ENCODE measurements at regions of chr5 and their contacts with region 1.

Region 1: GRCh38 chr5:1140171-1140817 is 28.4 kb upstream of the SLC12A7 start:
- DNase-seq: peak; percentile 82 to 95 (median 90)
- ATAC-seq: peak; percentile 90 to 97 (median 94)
- H3K4me3 ChIP-seq: no peak overlapping the region
- H3K27ac ChIP-seq: peak overlapping the region in 2 of 4 donors; percentile 62 to 66
- H3K4me1 ChIP-seq: no peaks in the 10 kb centered on the region
- H3K27me3 ChIP-seq: no peaks in the 10 kb centered on the region
- CTCF ChIP-seq: peak; percentile 75 to 90 (median 85)

Region 2: GRCh38 chr5:912280-913091 is 227.8 kb before region 1 on chr5:
- intact Hi-C with region 1: no loop called
- DNase-seq: no peak
- ATAC-seq: peak in 1 of 4 donors; percentile 43
- H3K4me3 ChIP-seq: no peak overlapping the region
- H3K27ac ChIP-seq: no peak overlapping the region
- H3K4me1 ChIP-seq: peaks cover 11 to 15% (median 11%) of the 10 kb centered on the region in 3 donors
- H3K27me3 ChIP-seq: no peaks in the 10 kb centered on the region
- CTCF ChIP-seq: no peak

Region 3: GRCh38 chr5:922436-923280 is 217.6 kb before region 1 on chr5:
- intact Hi-C with region 1: no loop called
- DNase-seq: peak in 1 of 6 donors; percentile 11
- ATAC-seq: no peak
- H3K4me3 ChIP-seq: no peak overlapping the region
- H3K27ac ChIP-seq: no peak overlapping the region
- H3K4me1 ChIP-seq: peaks cover 2 to 4% (median 3%) of the 10 kb centered on the region in 3 donors
- H3K27me3 ChIP-seq: no peaks in the 10 kb centered on the region
- CTCF ChIP-seq: no peak

Region 4: DNA sequence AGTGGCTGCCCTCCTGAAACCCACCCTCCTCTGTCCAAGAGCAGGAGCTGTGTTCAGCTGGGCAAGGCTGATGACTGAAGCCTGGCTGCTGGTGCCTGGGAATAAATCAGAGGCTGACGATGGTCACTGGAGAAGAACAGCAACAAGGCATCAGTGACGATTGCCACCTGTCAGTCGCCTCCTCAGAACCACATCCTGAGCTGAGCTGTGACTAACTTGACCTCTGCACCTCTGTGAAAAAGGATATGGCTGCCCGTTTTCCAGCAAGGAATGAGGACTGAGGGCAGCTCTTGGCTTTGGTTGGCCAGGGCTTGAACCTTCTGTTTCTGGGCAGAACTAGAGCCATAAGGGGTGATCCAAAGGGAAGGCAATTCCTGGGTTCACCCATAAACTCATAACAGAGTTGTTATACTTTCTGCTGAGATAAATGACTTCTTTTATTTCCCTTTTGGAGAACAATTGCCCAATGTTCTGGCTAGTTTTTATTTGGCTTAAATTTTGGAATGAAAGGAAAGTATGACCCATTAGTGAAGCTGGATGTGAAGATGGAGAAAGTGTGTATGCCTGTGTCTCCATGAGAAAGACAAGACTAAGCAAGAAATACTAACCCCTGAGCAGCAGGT is 207.6 kb before region 1 on chr5:
- intact Hi-C with region 1: loop called in 1 of 3 experiments (anchors 10 kb)
- DNase-seq: peak in 1 of 6 donors; percentile 6
- ATAC-seq: peak in 1 of 4 donors; percentile 30
- H3K4me3 ChIP-seq: no peak overlapping the region
- H3K27ac ChIP-seq: no peak overlapping the region
- H3K4me1 ChIP-seq: no peaks in the 10 kb centered on the region
- H3K27me3 ChIP-seq: no peaks in the 10 kb centered on the region
- CTCF ChIP-seq: no peak

Region 5: GRCh38 chr5:956941-957747 is 183.2 kb before region 1 on chr5:
- intact Hi-C with region 1: no loop called
- DNase-seq: peak in 2 of 6 donors; percentile 39 to 49
- ATAC-seq: peak; percentile 51 to 79 (median 70)
- H3K4me3 ChIP-seq: no peak overlapping the region
- H3K27ac ChIP-seq: peak overlapping the region; percentile 54 to 76 (median 62)
- H3K4me1 ChIP-seq: peaks cover 0 to 4% (median 0%) of the 10 kb centered on the region in 3 donors
- H3K27me3 ChIP-seq: no peaks in the 10 kb centered on the region
- CTCF ChIP-seq: no peak

Region 6: DNA sequence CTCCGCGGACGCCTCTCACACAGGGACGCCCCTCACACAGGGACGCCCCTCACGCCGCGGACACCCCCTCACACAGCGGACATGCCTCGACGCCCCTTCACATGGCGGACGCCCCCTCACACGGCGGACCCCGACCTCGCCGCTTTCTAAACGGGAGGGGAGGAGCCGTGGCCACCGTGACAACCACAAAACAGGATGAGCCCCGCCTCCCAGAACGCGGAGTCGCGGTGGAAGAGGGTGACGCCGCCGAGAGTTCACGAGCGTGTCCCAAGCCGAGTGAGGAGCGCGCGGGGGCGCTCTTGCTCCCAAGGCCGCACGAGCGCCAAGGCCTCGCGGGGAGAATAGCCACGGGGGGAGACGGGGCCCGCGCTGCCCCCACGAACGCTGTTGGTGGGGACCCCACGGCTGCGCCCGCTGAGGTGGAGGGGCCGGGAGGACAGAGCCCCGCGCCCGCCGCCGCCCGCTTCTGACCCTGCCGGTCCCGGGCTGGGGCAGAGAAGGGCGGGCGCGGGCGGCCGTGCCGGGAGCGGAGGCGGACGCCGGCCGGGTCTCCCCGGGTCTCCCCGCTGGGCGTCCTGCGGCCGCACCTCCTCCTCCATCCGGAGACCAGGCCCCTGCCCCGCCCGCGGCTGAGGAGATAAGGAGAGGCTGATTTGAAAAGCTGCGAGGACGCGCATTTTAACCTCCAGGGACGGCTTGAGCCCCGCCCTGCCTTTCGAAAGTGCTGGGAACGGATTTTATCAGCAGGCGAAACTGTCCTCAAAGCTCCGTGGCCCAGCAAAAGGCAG is 135.6 kb before region 1 on chr5:
- intact Hi-C with region 1: loop called in 1 of 3 experiments (anchors 10 kb)
- DNase-seq: peak; percentile 58 to 87 (median 70)
- ATAC-seq: peak; percentile 66 to 81 (median 78)
- H3K4me3 ChIP-seq: peak overlapping the region; percentile 9 to 56 (median 27)
- H3K27ac ChIP-seq: peak overlapping the region; percentile 0 to 29 (median 10)
- H3K4me1 ChIP-seq: peaks cover 0 to 6% (median 0%) of the 10 kb centered on the region in 3 donors
- H3K27me3 ChIP-seq: no peaks in the 10 kb centered on the region
- CTCF ChIP-seq: no peak

Region 7: GRCh38 chr5:1011226-1011631 is 129.1 kb before region 1 on chr5:
- intact Hi-C with region 1: loop called in 2 of 3 experiments (anchors 5 to 10 kb)
- DNase-seq: peak; percentile 55 to 86 (median 79)
- ATAC-seq: peak; percentile 51 to 85 (median 71)
- H3K4me3 ChIP-seq: no peak overlapping the region
- H3K27ac ChIP-seq: no peak overlapping the region
- H3K4me1 ChIP-seq: peaks cover 4 to 16% (median 6%) of the 10 kb centered on the region in 3 donors
- H3K27me3 ChIP-seq: no peaks in the 10 kb centered on the region
- CTCF ChIP-seq: peak; percentile 42 to 57 (median 47)

Measured in pancreas (tissue), 10 donors.